ENCODE measurements at regions of chr3 and their contacts with region 1.

Region 1: GRCh38 chr3:42749753-42750231 is 23.3 kb downstream of the CCDC13 start:
- DNase-seq: peak in 1 of 5 donors; percentile 31
- ATAC-seq: peak; percentile 15 to 47 (median 31)
- H3K4me3 ChIP-seq: no peak overlapping the region
- H3K27ac ChIP-seq: peak overlapping the region in 3 of 12 donors; percentile 24 to 94 (median 87)
- H3K4me1 ChIP-seq: peaks cover 0 to 47% (median 13%) of the 10 kb centered on the region in 12 donors
- H3K27me3 ChIP-seq: no peaks in the 10 kb centered on the region
- CTCF ChIP-seq: peak; percentile 9 to 61 (median 38)
- POLR2A ChIP-seq: no peak

Region 2: DNA sequence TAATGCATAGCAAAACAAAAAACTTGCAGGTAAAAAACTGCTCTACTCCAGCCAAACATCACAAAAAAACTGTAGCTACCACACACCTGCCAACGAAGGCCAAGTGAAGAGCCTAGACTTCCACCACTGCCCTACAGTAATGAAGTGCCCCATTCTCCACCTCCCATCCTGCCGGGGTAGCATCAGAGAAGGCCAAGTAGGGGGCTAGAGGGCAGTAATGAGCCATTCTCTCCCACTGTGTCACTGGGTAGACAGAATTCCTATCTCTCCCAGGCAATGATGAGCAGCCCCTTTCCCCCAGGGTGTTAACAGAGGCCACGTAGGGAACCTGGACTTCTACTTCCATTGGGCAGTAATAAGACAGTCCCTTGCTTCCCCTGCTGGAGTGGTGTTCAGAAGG is 177.5 kb before region 1 on chr3:
- intact Hi-C with region 1: loop called in 3 of 10 experiments (anchors 5 to 10 kb)
- DNase-seq: no peak
- ATAC-seq: peak; percentile 66 to 83 (median 78)
- H3K4me3 ChIP-seq: no peak overlapping the region
- H3K27ac ChIP-seq: no peak overlapping the region
- H3K4me1 ChIP-seq: peaks cover 0 to 5% (median 0%) of the 10 kb centered on the region in 12 donors
- H3K27me3 ChIP-seq: no peaks in the 10 kb centered on the region
- CTCF ChIP-seq: peak in 11 of 12 donors; percentile 12 to 54 (median 34)
- POLR2A ChIP-seq: no peak

Region 3: GRCh38 chr3:42590989-42591756 is 158.6 kb before region 1 on chr3:
- intact Hi-C with region 1: loop called in 1 of 10 experiments (anchors 5 kb)
- DNase-seq: no peak
- ATAC-seq: peak in 3 of 4 donors; percentile 9 to 15 (median 11)
- H3K4me3 ChIP-seq: peak overlapping the region; percentile 54 to 93 (median 74)
- H3K27ac ChIP-seq: peak overlapping the region; percentile 25 to 89 (median 80)
- H3K4me1 ChIP-seq: peaks cover 0 to 24% (median 9%) of the 10 kb centered on the region in 12 donors
- H3K27me3 ChIP-seq: no peaks in the 10 kb centered on the region
- CTCF ChIP-seq: no peak
- POLR2A ChIP-seq: no peak

Region 4: GRCh38 chr3:42652611-42653302 is 97.0 kb before region 1 on chr3:
- intact Hi-C with region 1: loop called in 6 of 10 experiments (anchors 1 to 5 kb)
- DNase-seq: peak; percentile 60 to 77 (median 75)
- ATAC-seq: peak; percentile 16 to 58 (median 50)
- H3K4me3 ChIP-seq: peak overlapping the region in 11 of 12 donors; percentile 68 to 99 (median 89)
- H3K27ac ChIP-seq: peak overlapping the region; percentile 84 to 99 (median 94)
- H3K4me1 ChIP-seq: peaks cover 11 to 88% (median 51%) of the 10 kb centered on the region in 12 donors
- H3K27me3 ChIP-seq: no peaks in the 10 kb centered on the region
- CTCF ChIP-seq: no peak
- POLR2A ChIP-seq: peak in 1 of 2 donors; percentile 84

Region 5: GRCh38 chr3:42701142-42702065 is 48.4 kb before region 1 on chr3:
- intact Hi-C with region 1: loop called in 4 of 10 experiments (anchors 1 to 5 kb)
- DNase-seq: peak; percentile 85 to 90 (median 86)
- ATAC-seq: peak; percentile 75 to 81 (median 80)
- H3K4me3 ChIP-seq: peak overlapping the region; percentile 23 to 67 (median 54)
- H3K27ac ChIP-seq: peak overlapping the region; percentile 85 to 99 (median 96)
- H3K4me1 ChIP-seq: peaks cover 0 to 61% (median 6%) of the 10 kb centered on the region in 12 donors
- H3K27me3 ChIP-seq: no peaks in the 10 kb centered on the region
- CTCF ChIP-seq: peak in 2 of 12 donors; percentile 24 to 28
- POLR2A ChIP-seq: peak; percentile 1 to 79

Measured in heart left ventricle (tissue), 16 donors.